Motor neuron (in vitro differentiated cells): ENCODE measurements at regions of chr3 and their contacts with region 1.

Region 1: GRCh38 chr3:176514297-176514696 is 683.0 kb downstream of the TBL1XR1 start:
- ATAC-seq: peak in 3 of 8 experiments; percentile 29 to 71 (median 64)
- H3K4me3 ChIP-seq: no peak overlapping the region
- H3K27ac ChIP-seq: no peak overlapping the region
- H3K4me1 ChIP-seq: no peaks in the 10 kb centered on the region

Region 2: DNA sequence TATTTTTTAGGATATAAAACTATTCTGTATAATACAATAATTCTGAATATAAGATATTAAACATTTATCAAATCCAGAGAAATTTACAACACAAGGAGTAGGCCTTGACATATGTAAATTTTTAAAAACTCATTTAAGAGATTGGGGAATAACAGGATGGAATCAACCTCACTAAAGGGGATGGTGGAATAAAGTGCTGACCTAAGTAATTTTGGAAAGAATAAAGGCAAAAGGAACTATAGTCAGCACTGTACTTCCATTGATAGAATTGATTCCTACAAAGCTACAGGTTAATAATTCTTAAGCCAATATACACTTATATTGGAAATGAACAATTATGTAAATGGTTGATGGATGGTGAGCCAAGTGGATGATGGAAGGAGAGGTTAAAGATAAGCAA is 133.7 kb after region 1 on chr3:
- in situ Hi-C with region 1: loop called in 1 of 9 experiments (anchors 10 kb)
- ATAC-seq: no peak
- H3K4me3 ChIP-seq: no peak overlapping the region
- H3K27ac ChIP-seq: no peak overlapping the region
- H3K4me1 ChIP-seq: no peaks in the 10 kb centered on the region

Region 3: GRCh38 chr3:176814285-176814684 is 300.0 kb after region 1 on chr3:
- in situ Hi-C with region 1: loop called in 1 of 9 experiments (anchors 25 kb)
- ATAC-seq: peak; percentile 87 to 100 (median 97)
- H3K4me3 ChIP-seq: no peak overlapping the region
- H3K27ac ChIP-seq: no peak overlapping the region
- H3K4me1 ChIP-seq: no peaks in the 10 kb centered on the region

Region 4: GRCh38 chr3:176939022-176939817 is 424.9 kb after region 1 on chr3:
- in situ Hi-C with region 1: loop called in 1 of 9 experiments (anchors 10 kb)
- ATAC-seq: peak; percentile 53 to 96 (median 71)
- H3K4me3 ChIP-seq: no peak overlapping the region
- H3K27ac ChIP-seq: no peak overlapping the region
- H3K4me1 ChIP-seq: peaks cover 11 to 16% of the 10 kb centered on the region in 2 donors